ENCODE measurements at regions of chr1 and their contacts with region 1.

Region 1: DNA sequence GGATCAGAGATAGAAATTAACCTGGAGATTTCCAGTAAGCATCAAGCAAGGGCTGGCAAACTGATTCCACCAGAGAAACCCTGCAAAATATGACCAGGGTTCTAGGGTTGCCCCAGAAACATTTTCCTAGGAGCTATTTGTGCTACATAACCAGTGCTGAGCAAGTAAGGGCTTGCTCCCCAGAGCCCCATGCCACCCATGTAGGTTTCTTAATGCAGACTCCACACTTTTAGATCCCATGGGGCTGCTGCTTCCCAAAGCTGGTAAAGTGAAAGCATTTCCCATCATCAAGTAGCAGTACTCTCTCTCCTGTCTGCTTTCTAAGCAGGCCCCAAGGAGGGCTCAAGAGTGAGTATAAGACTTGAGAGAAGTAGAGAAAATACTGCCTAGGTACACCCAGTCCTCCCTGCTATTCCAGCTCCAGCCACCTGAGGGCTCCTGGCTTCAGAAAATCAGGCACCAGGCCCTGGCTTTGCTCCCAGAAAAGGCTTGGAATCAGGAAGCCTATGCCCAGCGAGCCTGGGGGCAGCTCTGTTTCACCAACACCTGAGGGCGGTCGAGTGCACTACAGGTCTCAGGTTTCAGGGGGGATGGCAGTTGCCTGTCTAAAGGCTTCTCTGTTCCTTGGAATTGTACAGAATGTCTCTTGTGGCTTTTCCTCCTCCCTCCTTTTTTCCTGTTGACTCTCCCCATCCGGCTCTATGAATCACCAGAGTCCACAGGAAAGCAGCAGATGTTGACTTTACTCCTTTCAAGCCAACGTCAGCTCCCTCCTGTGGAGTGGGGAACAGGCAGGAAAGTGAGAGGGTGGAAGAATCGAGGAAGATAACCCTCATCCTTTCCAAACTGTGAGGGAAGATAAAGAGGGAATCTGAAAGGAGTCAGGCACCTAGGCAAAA is 6.2 kb upstream of the ANKRD35 start:
- DNase-seq: peak; percentile 100
- H3K4me3 Mint-ChIP-seq: peak overlapping the region; percentile 57
- H3K27ac Mint-ChIP-seq: peak overlapping the region; percentile 95
- H3K4me1 Mint-ChIP-seq: peaks cover 36% of the 10 kb centered on the region
- H3K27me3 Mint-ChIP-seq: no peaks in the 10 kb centered on the region
- CTCF ChIP-seq: peak; percentile 98

Region 2: GRCh38 chr1:145792484-145792883 is 99.4 kb before region 1 on chr1:
- CTCF ChIA-PET with region 1: no interaction called
- POLR2A ChIA-PET with region 1: no interaction called
- intact Hi-C with region 1: no loop called
- DNase-seq: no peak
- H3K4me3 Mint-ChIP-seq: no peak overlapping the region
- H3K27ac Mint-ChIP-seq: no peak overlapping the region
- H3K4me1 Mint-ChIP-seq: no peaks in the 10 kb centered on the region
- H3K27me3 Mint-ChIP-seq: no peaks in the 10 kb centered on the region
- CTCF ChIP-seq: no peak

Region 3: DNA sequence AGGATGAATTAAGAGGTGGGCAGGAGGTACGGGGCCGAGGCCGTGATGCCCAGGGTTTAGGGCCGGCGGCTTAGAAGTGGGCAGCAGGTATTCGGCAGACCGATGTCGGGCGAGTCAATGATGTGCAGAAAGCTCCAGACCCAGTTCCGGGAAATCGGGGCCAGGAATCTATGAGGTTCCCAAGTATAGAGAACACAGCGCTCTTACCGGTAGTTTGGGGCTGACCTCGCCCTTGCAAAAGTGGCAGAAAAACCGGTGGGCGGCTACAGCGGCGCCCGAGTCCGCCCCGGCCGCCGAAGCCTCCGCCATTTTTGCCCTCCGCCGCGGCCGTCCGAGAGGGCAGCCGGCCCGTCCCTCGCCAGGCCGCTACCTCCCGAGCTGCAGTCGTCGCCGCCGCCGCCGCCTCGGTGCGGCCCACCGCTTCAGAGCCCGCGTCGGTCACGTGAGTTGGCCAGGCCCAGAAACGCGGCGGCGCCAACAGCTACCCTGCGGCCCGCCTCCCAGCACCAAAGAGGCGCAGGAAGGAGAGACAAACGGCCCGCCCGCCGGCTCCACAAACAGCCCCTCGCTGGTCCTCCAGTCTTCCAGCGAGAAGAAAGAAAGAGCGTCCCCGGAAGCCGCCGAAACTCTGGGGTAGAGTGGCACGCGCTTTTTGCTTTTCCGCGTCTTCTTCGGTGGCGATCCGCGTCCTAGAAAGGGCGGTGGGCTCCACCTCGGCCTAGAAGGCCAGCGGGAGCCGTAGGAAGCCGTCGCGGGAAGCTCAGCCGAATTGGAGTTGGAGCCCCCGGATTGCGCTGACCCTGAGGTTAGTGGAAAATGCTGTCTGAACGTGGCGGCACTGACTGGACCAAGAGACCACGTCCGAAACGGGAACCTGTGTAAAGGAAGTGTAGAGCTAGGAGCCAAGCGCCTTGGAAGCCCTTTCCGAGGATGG is 68.0 kb before region 1 on chr1 and contains the starts of genes POLR3C and RNF115:
- CTCF ChIA-PET with region 1: interaction called, 3 read pairs
- POLR2A ChIA-PET with region 1: interaction called, 19 read pairs
- intact Hi-C with region 1: no loop called
- DNase-seq: peak; percentile 95
- H3K4me3 Mint-ChIP-seq: peak within 1 kb of the TSS; percentile 90
- H3K27ac Mint-ChIP-seq: peak within 1 kb of the TSS; percentile 94
- H3K4me1 Mint-ChIP-seq: peaks cover 6% of the 10 kb centered on the region
- H3K27me3 Mint-ChIP-seq: no peaks in the 10 kb centered on the region
- CTCF ChIP-seq: no peak
- total RNA-seq, gene POLR3C: 67.9 and 96.8 TPM in 2 replicates
- total RNA-seq, gene RNF115: 16.8 and 19.5 TPM in 2 replicates

Region 4: GRCh38 chr1:145871994-145872924 is 19.6 kb before region 1 on chr1:
- CTCF ChIA-PET with region 1: interaction called, 19 read pairs
- POLR2A ChIA-PET with region 1: interaction called, 4 read pairs
- intact Hi-C with region 1: no loop called
- DNase-seq: no peak
- H3K4me3 Mint-ChIP-seq: no peak overlapping the region
- H3K27ac Mint-ChIP-seq: no peak overlapping the region
- H3K4me1 Mint-ChIP-seq: no peaks in the 10 kb centered on the region
- H3K27me3 Mint-ChIP-seq: peaks cover 11% of the 10 kb centered on the region
- CTCF ChIP-seq: no peak

Region 5: GRCh38 chr1:145918144-145918992 is 26.5 kb after region 1 on chr1 and contains the start of gene PEX11B:
- CTCF ChIA-PET with region 1: interaction called, 617 read pairs
- POLR2A ChIA-PET with region 1: interaction called, 284 read pairs
- intact Hi-C with region 1: no loop called
- DNase-seq: peak; percentile 92
- H3K4me3 Mint-ChIP-seq: peak within 1 kb of the TSS; percentile 94
- H3K27ac Mint-ChIP-seq: peak within 1 kb of the TSS; percentile 99
- H3K4me1 Mint-ChIP-seq: peaks cover 43% of the 10 kb centered on the region
- H3K27me3 Mint-ChIP-seq: no peaks in the 10 kb centered on the region
- CTCF ChIP-seq: no peak
- total RNA-seq, gene PEX11B: 35.5 and 36.2 TPM in 2 replicates

Region 6: GRCh38 chr1:145963995-145964901 is 72.4 kb after region 1 on chr1 and contains the starts of genes ANKRD34A and POLR3GL:
- CTCF ChIA-PET with region 1: interaction called, 32 read pairs
- POLR2A ChIA-PET with region 1: interaction called, 77 read pairs
- intact Hi-C with region 1: no loop called
- DNase-seq: peak; percentile 98
- H3K4me3 Mint-ChIP-seq: peak within 1 kb of the TSS; percentile 92
- H3K27ac Mint-ChIP-seq: peak within 1 kb of the TSS; percentile 96
- H3K4me1 Mint-ChIP-seq: peaks cover 42% of the 10 kb centered on the region
- H3K27me3 Mint-ChIP-seq: no peaks in the 10 kb centered on the region
- CTCF ChIP-seq: no peak
- total RNA-seq, gene ANKRD34A: 2.6 and 3.1 TPM in 2 replicates
- total RNA-seq, gene POLR3GL: 17.6 and 20.9 TPM in 2 replicates

Region 7: GRCh38 chr1:145996433-145997015 is 104.7 kb after region 1 on chr1 and contains the start of gene TXNIP:
- CTCF ChIA-PET with region 1: interaction called, 13 read pairs
- POLR2A ChIA-PET with region 1: interaction called, 54 read pairs
- intact Hi-C with region 1: no loop called
- DNase-seq: peak; percentile 99
- H3K4me3 Mint-ChIP-seq: peak within 1 kb of the TSS; percentile 89
- H3K27ac Mint-ChIP-seq: peak within 1 kb of the TSS; percentile 95
- H3K4me1 Mint-ChIP-seq: peaks cover 51% of the 10 kb centered on the region
- H3K27me3 Mint-ChIP-seq: no peaks in the 10 kb centered on the region
- CTCF ChIP-seq: no peak
- total RNA-seq, gene TXNIP: 576 and 599 TPM in 2 replicates

Region 8: DNA sequence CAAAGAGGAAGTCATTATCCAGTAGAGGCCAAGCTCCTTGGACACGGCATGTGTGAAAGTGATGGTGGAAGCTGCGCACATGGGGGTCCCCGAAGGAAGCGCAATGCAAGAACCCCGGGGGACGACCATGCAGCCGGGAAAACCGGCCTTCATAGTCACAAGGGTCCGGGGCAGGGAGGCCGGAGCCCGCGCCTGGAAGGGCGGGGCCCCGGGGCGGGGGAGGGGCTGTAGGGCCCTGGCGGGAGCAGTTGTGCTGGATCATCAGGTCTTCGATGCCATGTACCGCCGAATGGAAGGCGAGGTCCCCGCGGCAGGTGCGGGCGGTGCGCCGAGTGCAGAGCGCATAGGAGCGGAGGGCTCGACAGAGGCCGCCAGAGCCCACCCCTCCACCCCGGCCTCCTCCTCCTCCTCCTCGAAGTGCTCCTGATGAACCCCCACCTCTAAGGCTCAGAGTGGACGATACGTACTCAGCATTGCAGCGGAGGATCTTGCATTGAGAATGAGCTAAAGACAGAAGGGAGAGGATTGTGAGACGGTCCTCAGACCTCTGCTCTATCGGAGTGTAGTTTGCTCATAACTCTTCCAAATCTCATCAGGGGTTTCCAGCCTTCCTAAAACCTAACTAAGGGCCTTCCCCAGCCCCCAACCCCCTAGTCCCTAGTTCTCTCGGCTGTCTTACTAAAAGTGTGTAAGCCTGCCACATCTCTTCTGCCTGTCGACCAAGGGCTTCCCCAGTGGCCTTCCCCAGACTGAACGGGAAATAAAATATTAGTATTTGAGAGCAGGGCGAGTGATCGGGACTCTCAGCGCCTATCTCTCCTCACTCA is 127.6 kb after region 1 on chr1:
- CTCF ChIA-PET with region 1: interaction called, 17 read pairs
- POLR2A ChIA-PET with region 1: interaction called, 3 read pairs
- intact Hi-C with region 1: no loop called
- DNase-seq: no peak
- H3K4me3 Mint-ChIP-seq: no peak overlapping the region
- H3K27ac Mint-ChIP-seq: no peak overlapping the region
- H3K4me1 Mint-ChIP-seq: peaks cover 5% of the 10 kb centered on the region
- H3K27me3 Mint-ChIP-seq: peaks cover 23% of the 10 kb centered on the region
- CTCF ChIP-seq: no peak